CD8-positive, alpha-beta T cell (primary cell): ENCODE measurements at regions of chr3 and their contacts with region 1.

Region 1: DNA sequence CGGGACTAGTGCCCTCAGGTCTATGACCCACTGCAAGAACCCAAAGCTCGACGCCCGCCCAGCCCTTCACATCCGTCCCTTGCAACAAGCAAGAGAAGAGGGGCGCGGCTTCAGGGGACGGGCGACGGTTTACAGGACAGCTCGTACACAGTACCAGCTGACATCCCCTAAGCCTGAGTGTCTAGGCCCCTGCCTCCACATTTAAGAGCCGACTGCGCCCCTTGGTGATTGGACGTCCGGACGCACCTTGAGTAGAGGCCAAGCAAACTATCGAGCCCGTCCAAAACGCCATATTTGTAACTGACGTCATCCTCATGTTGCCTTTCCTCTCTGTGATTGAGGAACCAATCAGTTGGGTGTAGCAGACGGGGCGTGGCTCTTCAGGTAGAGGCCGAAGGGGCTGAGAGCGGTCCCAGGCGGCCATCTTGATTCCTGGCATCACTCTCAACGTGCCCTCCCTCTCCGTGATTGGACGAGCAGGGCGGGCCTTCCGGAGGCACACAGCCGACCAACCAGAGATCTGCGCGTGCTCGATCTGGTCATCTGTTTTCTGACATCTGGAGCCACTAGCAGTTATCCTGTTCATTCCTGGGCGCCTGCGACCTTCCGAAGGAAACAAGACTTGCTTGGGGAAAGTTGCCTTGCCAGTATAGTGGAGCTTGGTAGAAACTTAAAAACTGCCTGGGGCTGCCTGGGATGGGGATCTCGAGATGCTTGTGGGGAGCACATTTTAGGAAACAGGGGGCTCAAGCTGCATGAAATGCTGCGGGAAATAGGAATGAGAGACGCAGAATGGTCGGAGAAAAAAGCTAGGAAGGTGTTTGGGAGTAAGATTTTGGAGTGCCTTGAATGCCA is 4.0 kb upstream of the RPL14 start:
- DNase-seq: peak; percentile 89 to 99 (median 94)
- ATAC-seq: peak; percentile 89
- H3K4me3 ChIP-seq: peak overlapping the region; percentile 57 to 75
- H3K4me3 Mint-ChIP-seq: peak overlapping the region; percentile 92
- H3K27ac ChIP-seq: peak overlapping the region; percentile 85 to 95
- H3K27ac Mint-ChIP-seq: peak overlapping the region; percentile 99
- H3K4me1 ChIP-seq: peaks cover 22% of the 10 kb centered on the region
- H3K4me1 Mint-ChIP-seq: peaks cover 32% of the 10 kb centered on the region
- H3K27me3 ChIP-seq: no peaks in the 10 kb centered on the region
- H3K27me3 Mint-ChIP-seq: no peaks in the 10 kb centered on the region
- CTCF ChIP-seq: no peak

Region 2: DNA sequence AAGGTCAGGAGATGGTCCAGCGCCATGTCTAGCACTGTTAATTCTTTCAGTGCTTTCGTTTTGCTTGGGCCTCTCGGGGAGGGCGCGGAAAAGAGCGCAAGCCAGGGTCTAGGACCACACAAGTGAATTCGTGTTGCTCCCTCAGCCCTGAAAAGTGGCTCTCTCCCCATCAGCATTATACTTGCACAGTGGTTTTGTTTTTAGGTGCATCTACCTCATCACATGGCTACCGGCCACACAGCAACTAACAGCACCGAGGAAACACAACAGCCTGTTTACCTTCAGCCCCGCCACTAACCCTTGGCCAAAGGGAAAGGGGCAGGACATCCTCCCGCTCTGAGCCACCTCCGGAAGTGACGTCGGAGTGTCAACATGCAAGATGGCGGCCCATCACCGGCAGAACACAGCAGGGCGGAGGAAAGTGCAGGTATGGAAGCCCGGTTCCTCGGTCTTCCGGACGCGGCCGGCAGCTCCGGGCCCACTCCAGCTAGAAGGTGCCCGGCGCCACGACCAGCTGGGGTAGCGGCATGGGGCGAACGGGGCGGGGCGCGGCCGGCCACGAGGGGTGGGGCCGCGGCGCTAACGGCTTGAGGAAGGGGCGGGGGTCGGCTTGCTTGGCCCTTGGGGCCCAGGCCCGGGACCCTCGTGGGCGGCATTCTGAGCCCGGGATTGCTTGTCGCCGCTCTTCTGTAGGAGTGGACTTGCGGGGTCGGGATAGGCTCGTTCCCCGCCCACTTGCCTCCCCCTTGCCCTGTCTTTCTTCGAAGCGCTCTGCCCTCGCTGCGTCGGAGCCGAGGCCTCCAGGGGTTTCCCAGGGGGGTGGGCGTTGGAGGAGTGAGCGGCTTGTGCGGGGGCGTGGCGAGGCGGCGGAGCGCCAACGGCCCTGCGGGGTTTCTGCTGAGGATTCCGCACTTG is 1401.2 kb before region 1 on chr3 and contains the starts of genes SCN11A and WDR48:
- CTCF ChIA-PET with region 1: no interaction called
- POLR2A ChIA-PET with region 1: no interaction called
- intact Hi-C with region 1: loop called (anchors 2 to 5 kb)
- DNase-seq: peak; percentile 82 to 97 (median 94)
- ATAC-seq: peak; percentile 88
- H3K4me3 ChIP-seq: peak within 1 kb of the TSS; percentile 59 to 70
- H3K4me3 Mint-ChIP-seq: peak within 1 kb of the TSS; percentile 98
- H3K27ac ChIP-seq: peak within 1 kb of the TSS; percentile 83 to 91
- H3K27ac Mint-ChIP-seq: peak within 1 kb of the TSS; percentile 98
- H3K4me1 ChIP-seq: peaks cover 16% of the 10 kb centered on the region
- H3K4me1 Mint-ChIP-seq: peaks cover 67% of the 10 kb centered on the region
- H3K27me3 ChIP-seq: no peaks in the 10 kb centered on the region
- H3K27me3 Mint-ChIP-seq: no peaks in the 10 kb centered on the region
- CTCF ChIP-seq: no peak
- total RNA-seq, gene SCN11A: 0.08 to 0.11 TPM
- total RNA-seq, gene WDR48: 102 to 103 TPM

Region 3: GRCh38 chr3:39406368-39407258 is 1046.5 kb before region 1 on chr3 and contains the start of gene RPSA:
- CTCF ChIA-PET with region 1: no interaction called
- POLR2A ChIA-PET with region 1: no interaction called
- intact Hi-C with region 1: loop called in 1 of 2 experiments (anchors 5 kb)
- DNase-seq: peak; percentile 88 to 99 (median 94)
- ATAC-seq: peak; percentile 90
- H3K4me3 ChIP-seq: peak within 1 kb of the TSS; percentile 67 to 75
- H3K4me3 Mint-ChIP-seq: peak within 1 kb of the TSS; percentile 89
- H3K27ac ChIP-seq: peak within 1 kb of the TSS; percentile 83 to 90
- H3K27ac Mint-ChIP-seq: peak within 1 kb of the TSS; percentile 96
- H3K4me1 ChIP-seq: peaks cover 40% of the 10 kb centered on the region
- H3K4me1 Mint-ChIP-seq: peaks cover 48% of the 10 kb centered on the region
- H3K27me3 ChIP-seq: no peaks in the 10 kb centered on the region
- H3K27me3 Mint-ChIP-seq: no peaks in the 10 kb centered on the region
- CTCF ChIP-seq: peak; percentile 45
- total RNA-seq, gene RPSA: 1,951 to 2,020 TPM

Region 4: GRCh38 chr3:40382617-40382979 is 70.5 kb before region 1 on chr3:
- CTCF ChIA-PET with region 1: no interaction called
- POLR2A ChIA-PET with region 1: no interaction called
- intact Hi-C with region 1: no loop called
- DNase-seq: no peak
- ATAC-seq: no peak
- H3K4me3 ChIP-seq: no peak overlapping the region
- H3K4me3 Mint-ChIP-seq: no peak overlapping the region
- H3K27ac ChIP-seq: no peak overlapping the region
- H3K27ac Mint-ChIP-seq: no peak overlapping the region
- H3K4me1 ChIP-seq: peaks cover 7% of the 10 kb centered on the region
- H3K4me1 Mint-ChIP-seq: peaks cover 7% of the 10 kb centered on the region
- H3K27me3 ChIP-seq: peaks cover 3 to 9% of the 10 kb centered on the region in 2 experiments
- H3K27me3 Mint-ChIP-seq: peaks cover 12% of the 10 kb centered on the region
- CTCF ChIP-seq: no peak

Region 5: GRCh38 chr3:40468018-40468417 is 14.9 kb after region 1 on chr3:
- CTCF ChIA-PET with region 1: interaction called, 4 read pairs
- POLR2A ChIA-PET with region 1: interaction called, 10 read pairs
- intact Hi-C with region 1: no loop called
- DNase-seq: no peak
- ATAC-seq: no peak
- H3K4me3 ChIP-seq: no peak overlapping the region
- H3K4me3 Mint-ChIP-seq: no peak overlapping the region
- H3K27ac ChIP-seq: no peak overlapping the region
- H3K27ac Mint-ChIP-seq: no peak overlapping the region
- H3K4me1 ChIP-seq: peaks cover 18% of the 10 kb centered on the region
- H3K4me1 Mint-ChIP-seq: peaks cover 20% of the 10 kb centered on the region
- H3K27me3 ChIP-seq: no peaks in the 10 kb centered on the region
- H3K27me3 Mint-ChIP-seq: no peaks in the 10 kb centered on the region
- CTCF ChIP-seq: no peak

Region 6: DNA sequence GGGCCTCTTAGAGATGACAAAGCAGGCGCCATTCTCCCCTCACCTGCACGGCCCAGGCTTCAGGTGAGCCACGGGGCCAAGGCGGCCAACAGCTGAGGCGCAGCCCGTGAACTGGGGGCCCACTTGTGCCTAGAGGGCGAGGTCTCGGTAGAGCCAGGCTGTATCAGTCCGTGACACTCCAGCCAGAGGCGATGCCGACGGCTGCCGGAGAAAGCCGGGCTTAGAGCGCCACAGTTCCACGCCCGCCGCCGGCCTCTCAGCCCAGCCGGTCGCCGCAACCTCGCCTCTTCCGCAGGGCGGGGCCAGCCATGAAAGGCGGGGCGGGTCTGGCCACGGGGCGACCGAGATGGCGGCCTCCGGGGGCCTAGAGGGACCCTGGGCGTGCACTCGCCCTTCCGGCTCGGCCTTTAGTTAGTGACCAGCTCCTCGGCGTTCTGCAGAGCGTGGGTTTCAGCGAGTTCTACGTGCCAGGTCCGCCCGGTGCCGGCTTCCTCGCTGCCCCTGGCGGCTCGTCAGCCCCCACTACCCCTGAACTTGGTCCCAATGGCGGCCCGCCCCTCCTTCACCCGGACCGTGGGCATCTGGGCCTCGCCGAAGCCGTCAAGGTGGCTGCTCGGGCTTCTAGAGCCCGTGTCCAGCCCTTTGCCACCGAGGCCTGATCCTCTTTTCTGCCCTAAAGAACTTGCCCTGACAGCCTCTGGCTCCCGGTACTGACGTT is 71.6 kb after region 1 on chr3 and contains the start of gene ZNF621:
- CTCF ChIA-PET with region 1: no interaction called
- POLR2A ChIA-PET with region 1: interaction called, 19 read pairs
- intact Hi-C with region 1: loop called (anchors 1 kb)
- DNase-seq: peak; percentile 69 to 90 (median 84)
- ATAC-seq: peak; percentile 97
- H3K4me3 ChIP-seq: peak within 1 kb of the TSS; percentile 76 to 97
- H3K4me3 Mint-ChIP-seq: peak within 1 kb of the TSS; percentile 94
- H3K27ac ChIP-seq: peak within 1 kb of the TSS; percentile 80 to 94
- H3K27ac Mint-ChIP-seq: peak within 1 kb of the TSS; percentile 97
- H3K4me1 ChIP-seq: peaks cover 12% of the 10 kb centered on the region
- H3K4me1 Mint-ChIP-seq: peaks cover 38% of the 10 kb centered on the region
- H3K27me3 ChIP-seq: no peaks in the 10 kb centered on the region
- H3K27me3 Mint-ChIP-seq: no peaks in the 10 kb centered on the region
- CTCF ChIP-seq: no peak
- total RNA-seq, gene ZNF621: 7.1 to 9.7 TPM

Region 7: DNA sequence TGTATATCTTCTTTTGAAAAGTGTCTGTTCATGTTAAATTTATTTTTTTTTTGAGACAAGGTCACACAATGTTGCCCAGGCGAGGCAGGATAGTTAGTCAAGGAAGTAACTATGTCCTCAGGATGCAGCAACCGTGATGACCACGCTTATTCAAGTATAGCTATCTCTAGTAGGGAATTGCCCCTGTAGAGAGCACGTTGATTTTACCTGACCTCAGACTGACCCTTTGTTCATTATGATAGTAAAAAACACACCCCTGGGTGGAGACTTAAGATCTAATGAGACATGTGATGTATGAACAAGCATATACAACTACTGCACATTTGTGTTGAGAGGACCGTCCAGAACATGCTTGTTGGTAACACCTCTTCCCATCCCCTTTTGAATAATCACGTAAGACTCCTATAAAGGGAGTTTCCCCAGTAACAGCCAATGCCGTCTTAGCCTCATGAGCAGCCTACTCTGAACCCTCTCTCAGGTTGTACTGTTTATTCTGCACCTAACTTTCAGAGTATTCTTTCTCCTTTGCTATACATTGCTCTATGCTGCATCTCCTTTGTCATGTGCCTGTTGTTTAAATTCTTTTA is 104.6 kb after region 1 on chr3:
- CTCF ChIA-PET with region 1: no interaction called
- POLR2A ChIA-PET with region 1: no interaction called
- intact Hi-C with region 1: no loop called
- DNase-seq: no peak
- ATAC-seq: no peak
- H3K4me3 ChIP-seq: no peak overlapping the region
- H3K4me3 Mint-ChIP-seq: no peak overlapping the region
- H3K27ac ChIP-seq: no peak overlapping the region
- H3K27ac Mint-ChIP-seq: no peak overlapping the region
- H3K4me1 ChIP-seq: no peaks in the 10 kb centered on the region
- H3K4me1 Mint-ChIP-seq: no peaks in the 10 kb centered on the region
- H3K27me3 ChIP-seq: no peaks in the 10 kb centered on the region
- H3K27me3 Mint-ChIP-seq: peaks cover 1% of the 10 kb centered on the region
- CTCF ChIP-seq: no peak

Region 8: GRCh38 chr3:40645883-40646282 is 192.8 kb after region 1 on chr3:
- CTCF ChIA-PET with region 1: no interaction called
- POLR2A ChIA-PET with region 1: no interaction called
- intact Hi-C with region 1: no loop called
- DNase-seq: no peak
- ATAC-seq: no peak
- H3K4me3 ChIP-seq: no peak overlapping the region
- H3K4me3 Mint-ChIP-seq: no peak overlapping the region
- H3K27ac ChIP-seq: no peak overlapping the region
- H3K27ac Mint-ChIP-seq: no peak overlapping the region
- H3K4me1 ChIP-seq: no peaks in the 10 kb centered on the region
- H3K4me1 Mint-ChIP-seq: no peaks in the 10 kb centered on the region
- H3K27me3 ChIP-seq: no peaks in the 10 kb centered on the region
- H3K27me3 Mint-ChIP-seq: peaks cover 9% of the 10 kb centered on the region
- CTCF ChIP-seq: no peak

Region 9: DNA sequence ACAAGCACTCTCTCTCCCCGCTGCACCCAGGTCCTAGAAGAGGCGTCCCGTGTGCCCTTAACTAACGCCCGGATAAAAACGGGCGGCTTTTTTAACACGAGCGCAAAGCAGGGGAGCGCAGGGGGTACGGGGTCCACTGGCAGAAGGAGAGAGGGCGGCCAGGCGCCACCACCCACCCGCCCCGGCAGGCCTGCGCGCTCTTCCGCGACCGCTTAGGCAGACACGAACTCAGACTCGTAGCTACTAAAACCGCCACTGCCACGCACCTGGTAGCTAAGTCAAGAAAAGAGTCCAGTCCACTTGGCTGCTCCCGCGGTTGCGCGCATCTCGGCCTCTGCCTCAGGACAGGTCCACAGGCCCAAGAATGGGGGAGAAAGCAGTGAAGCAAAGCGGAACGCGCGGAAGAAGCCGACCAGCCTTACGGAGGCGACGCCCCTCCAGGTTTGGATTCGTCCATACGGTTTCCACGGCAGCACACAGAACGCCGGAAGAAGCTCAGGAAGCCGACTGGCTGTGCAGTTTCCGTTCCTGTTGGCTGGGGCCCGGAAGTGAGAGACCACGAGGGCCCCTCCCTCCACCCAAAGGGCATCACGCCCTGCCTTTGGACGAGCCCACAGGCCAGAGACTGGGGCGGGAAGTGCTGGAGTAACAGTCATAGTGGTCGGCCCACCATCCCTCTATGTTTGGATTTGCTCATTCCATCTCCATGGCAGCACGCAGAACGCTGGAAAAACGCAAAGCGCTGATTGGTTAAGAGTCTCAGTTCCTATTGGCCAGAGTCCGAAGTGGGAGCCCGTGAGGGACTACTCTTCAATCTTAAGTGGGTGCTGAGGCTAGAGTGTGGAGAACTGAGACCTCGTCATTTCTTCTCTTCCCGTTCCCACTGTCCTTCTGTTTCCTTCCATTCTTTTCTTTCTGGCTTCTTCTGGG is 1508.9 kb after region 1 on chr3 and contains the start of gene ULK4:
- CTCF ChIA-PET with region 1: no interaction called
- POLR2A ChIA-PET with region 1: interaction called, 9 read pairs
- intact Hi-C with region 1: loop called in 1 of 2 experiments (anchors 2 kb)
- DNase-seq: peak; percentile 89 to 99 (median 95)
- ATAC-seq: peak; percentile 84
- H3K4me3 ChIP-seq: peak within 1 kb of the TSS; percentile 84 to 99
- H3K4me3 Mint-ChIP-seq: peak within 1 kb of the TSS; percentile 100
- H3K27ac ChIP-seq: peak within 1 kb of the TSS; percentile 85 to 96
- H3K27ac Mint-ChIP-seq: peak within 1 kb of the TSS; percentile 99
- H3K4me1 ChIP-seq: peaks cover 15% of the 10 kb centered on the region
- H3K4me1 Mint-ChIP-seq: peaks cover 24% of the 10 kb centered on the region
- H3K27me3 ChIP-seq: no peaks in the 10 kb centered on the region
- H3K27me3 Mint-ChIP-seq: no peaks in the 10 kb centered on the region
- CTCF ChIP-seq: no peak
- total RNA-seq, gene ULK4: 11.9 to 15.1 TPM